ENCODE measurements at regions of chr19 and their contacts with region 1.

Region 1: GRCh38 chr19:4077882-4078614 is 11.3 kb upstream of the ZBTB7A start:
- DNase-seq: peak in 1 of 2 donors; percentile 72
- H3K4me3 ChIP-seq: peak overlapping the region; percentile 57 to 74
- H3K27ac ChIP-seq: peak overlapping the region; percentile 64 to 66
- H3K4me1 ChIP-seq: peaks cover 0 to 11% (median 8%) of the 10 kb centered on the region in 4 donors
- H3K27me3 ChIP-seq: peaks cover 0 to 10% of the 10 kb centered on the region in 2 donors
- CTCF ChIP-seq: no peak

Region 2: GRCh38 chr19:3513198-3514140 is 564.6 kb before region 1 on chr19:
- intact Hi-C with region 1: loop called (anchors 5 kb)
- DNase-seq: no peak
- H3K4me3 ChIP-seq: no peak overlapping the region
- H3K27ac ChIP-seq: no peak overlapping the region
- H3K4me1 ChIP-seq: peaks cover 0 to 38% (median 21%) of the 10 kb centered on the region in 4 donors
- H3K27me3 ChIP-seq: no peaks in the 10 kb centered on the region
- CTCF ChIP-seq: no peak